Naive thymus-derived CD4-positive, alpha-beta T cell (primary cell): ENCODE measurements at regions of chr1 and their contacts with region 1.

Region 1: DNA sequence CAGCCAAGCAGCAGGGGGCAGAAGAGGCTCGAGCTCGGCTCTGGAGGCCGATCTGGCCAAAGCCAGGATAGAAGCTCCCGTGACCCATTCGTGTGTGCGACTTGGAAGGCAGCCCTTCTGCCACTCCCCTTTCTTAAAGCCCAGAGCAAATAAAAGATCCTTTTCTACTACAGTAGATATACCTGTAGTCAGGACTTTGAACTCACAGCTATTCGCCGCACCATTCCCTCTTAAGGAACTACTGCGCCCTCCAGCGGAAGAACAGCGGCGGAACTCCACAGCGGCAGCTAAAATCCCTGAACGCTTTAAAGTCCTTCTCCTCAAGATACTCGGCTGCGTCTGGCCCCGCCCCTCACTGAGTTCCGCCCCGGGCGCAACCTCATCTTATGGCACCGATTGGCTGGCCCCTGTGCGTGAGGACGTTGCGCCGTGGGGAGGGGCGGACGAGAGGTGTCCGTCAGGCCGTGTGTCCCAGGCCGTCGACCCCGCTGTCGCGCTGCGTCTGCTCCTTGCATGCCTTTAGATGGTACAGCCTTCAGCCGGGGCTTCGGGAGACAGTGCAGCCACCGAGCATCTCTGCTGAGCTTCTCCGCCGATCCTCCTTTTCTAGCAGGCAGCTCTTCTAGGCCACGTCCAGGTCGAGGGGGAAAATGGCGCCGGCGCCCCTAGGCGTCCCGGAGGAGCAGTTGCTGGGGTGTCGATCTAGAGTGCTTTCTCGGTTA is at the start of gene LRIG2:
- DNase-seq: peak; percentile 90 to 97 (median 96)
- ATAC-seq: peak; percentile 98
- H3K4me3 ChIP-seq: peak within 1 kb of the TSS; percentile 83
- H3K4me3 Mint-ChIP-seq: peak within 1 kb of the TSS; percentile 95 to 100 (median 98)
- H3K27ac ChIP-seq: peak within 1 kb of the TSS; percentile 82
- H3K27ac Mint-ChIP-seq: peak within 1 kb of the TSS; percentile 91 to 98 (median 93)
- H3K4me1 ChIP-seq: peaks cover 10 to 18% of the 10 kb centered on the region in 2 donors
- H3K4me1 Mint-ChIP-seq: peaks cover 18 to 42% (median 29%) of the 10 kb centered on the region in 7 donors
- H3K27me3 ChIP-seq: no peaks in the 10 kb centered on the region
- H3K27me3 Mint-ChIP-seq: no peaks in the 10 kb centered on the region
- total RNA-seq, gene LRIG2: 15.5 to 27.0 (median 20.2) TPM

Region 2: GRCh38 chr1:111406321-111406768 is 1666.6 kb before region 1 on chr1:
- CTCF ChIA-PET with region 1: no interaction called
- POLR2A ChIA-PET with region 1: no interaction called
- intact Hi-C with region 1: loop called in 1 of 2 experiments (anchors 2 kb)
- DNase-seq: peak in 8 of 9 donors; percentile 33 to 74 (median 64)
- ATAC-seq: peak; percentile 99
- H3K4me3 ChIP-seq: no peak overlapping the region
- H3K4me3 Mint-ChIP-seq: peak overlapping the region; percentile 29 to 81 (median 61)
- H3K27ac ChIP-seq: peak overlapping the region; percentile 54
- H3K27ac Mint-ChIP-seq: peak overlapping the region in 8 of 9 donors; percentile 67 to 90 (median 78)
- H3K4me1 ChIP-seq: peaks cover 12 to 24% of the 10 kb centered on the region in 2 donors
- H3K4me1 Mint-ChIP-seq: peaks cover 14 to 38% (median 31%) of the 10 kb centered on the region in 7 donors
- H3K27me3 ChIP-seq: no peaks in the 10 kb centered on the region
- H3K27me3 Mint-ChIP-seq: peaks cover 0 to 26% (median 0%) of the 10 kb centered on the region in 5 donors

Region 3: GRCh38 chr1:112619520-112620376 is 453.2 kb before region 1 on chr1 and contains the start of gene CAPZA1:
- CTCF ChIA-PET with region 1: no interaction called
- POLR2A ChIA-PET with region 1: interaction called, 7 read pairs
- intact Hi-C with region 1: loop called (anchors 2 kb)
- DNase-seq: peak; percentile 83 to 93 (median 91)
- ATAC-seq: peak; percentile 89
- H3K4me3 ChIP-seq: peak within 1 kb of the TSS; percentile 93
- H3K4me3 Mint-ChIP-seq: peak within 1 kb of the TSS; percentile 98 to 100 (median 99)
- H3K27ac ChIP-seq: peak within 1 kb of the TSS; percentile 100
- H3K27ac Mint-ChIP-seq: peak within 1 kb of the TSS; percentile 99 to 100 (median 100)
- H3K4me1 ChIP-seq: peaks cover 19 to 21% of the 10 kb centered on the region in 2 donors
- H3K4me1 Mint-ChIP-seq: peaks cover 27 to 55% (median 46%) of the 10 kb centered on the region in 7 donors
- H3K27me3 ChIP-seq: no peaks in the 10 kb centered on the region
- H3K27me3 Mint-ChIP-seq: peaks cover 0 to 1% (median 0%) of the 10 kb centered on the region in 5 donors
- total RNA-seq, gene CAPZA1: 114 to 237 (median 143) TPM

Region 4: DNA sequence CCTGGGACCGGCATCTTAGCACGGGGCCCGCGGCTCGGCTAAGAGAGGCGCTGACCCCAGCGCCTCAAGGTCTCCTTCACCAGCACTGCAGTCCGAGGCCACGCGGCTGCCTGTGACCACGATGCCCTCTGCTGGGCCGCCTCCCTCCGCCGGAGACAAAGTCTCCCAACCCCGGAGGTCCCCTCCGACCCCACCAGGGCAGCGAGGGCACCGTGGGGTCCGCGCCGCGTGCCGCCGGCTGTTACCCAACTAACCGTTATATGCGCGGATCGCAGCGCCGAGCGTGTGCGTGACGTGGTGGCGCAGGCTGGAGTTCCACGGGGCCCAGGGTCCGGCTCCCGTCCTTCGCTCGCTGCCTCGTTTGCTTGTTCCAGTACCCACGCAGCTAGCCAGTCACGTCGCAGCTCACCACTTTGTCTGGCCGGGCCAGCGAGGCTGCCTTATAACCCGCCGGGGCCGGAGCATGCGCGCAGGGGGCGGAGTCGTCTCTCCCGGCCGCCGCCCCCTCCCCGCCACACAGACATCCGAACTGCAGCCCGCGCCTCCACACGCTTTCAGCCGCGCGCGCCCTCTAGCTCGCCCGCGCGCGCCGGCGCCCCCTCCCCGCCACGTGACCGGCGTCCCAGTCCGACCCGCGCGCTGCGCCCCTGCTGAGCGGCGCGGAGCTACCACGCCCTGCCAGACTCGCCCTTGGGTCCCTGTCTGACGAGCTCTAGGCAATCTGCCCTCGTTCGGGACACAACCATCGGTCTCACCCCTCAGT is 117.0 kb before region 1 on chr1 and contains the start of gene SLC16A1:
- CTCF ChIA-PET with region 1: interaction called, 4 read pairs
- POLR2A ChIA-PET with region 1: interaction called, 5 read pairs
- intact Hi-C with region 1: loop called (anchors 2 kb)
- DNase-seq: peak; percentile 80 to 94 (median 87)
- ATAC-seq: peak; percentile 90
- H3K4me3 ChIP-seq: peak within 1 kb of the TSS; percentile 97
- H3K4me3 Mint-ChIP-seq: peak within 1 kb of the TSS; percentile 71 to 100 (median 97)
- H3K27ac ChIP-seq: peak within 1 kb of the TSS; percentile 81
- H3K27ac Mint-ChIP-seq: peak within 1 kb of the TSS; percentile 25 to 100 (median 88)
- H3K4me1 ChIP-seq: peaks cover 16 to 17% of the 10 kb centered on the region in 2 donors
- H3K4me1 Mint-ChIP-seq: peaks cover 33 to 66% (median 57%) of the 10 kb centered on the region in 7 donors
- H3K27me3 ChIP-seq: no peaks in the 10 kb centered on the region
- H3K27me3 Mint-ChIP-seq: no peaks in the 10 kb centered on the region
- total RNA-seq, gene SLC16A1: 10.1 to 43.6 (median 19.1) TPM

Region 5: GRCh38 chr1:113677250-113678158 is 604.6 kb after region 1 on chr1:
- CTCF ChIA-PET with region 1: interaction called, 4 read pairs
- POLR2A ChIA-PET with region 1: no interaction called
- intact Hi-C with region 1: loop called (anchors 2 kb)
- DNase-seq: peak in 5 of 9 donors; percentile 23 to 49 (median 39)
- ATAC-seq: peak; percentile 60
- H3K4me3 ChIP-seq: no peak overlapping the region
- H3K4me3 Mint-ChIP-seq: no peak overlapping the region
- H3K27ac ChIP-seq: no peak overlapping the region
- H3K27ac Mint-ChIP-seq: no peak overlapping the region
- H3K4me1 ChIP-seq: no peaks in the 10 kb centered on the region
- H3K4me1 Mint-ChIP-seq: peaks cover 0 to 10% (median 0%) of the 10 kb centered on the region in 7 donors
- H3K27me3 ChIP-seq: no peaks in the 10 kb centered on the region
- H3K27me3 Mint-ChIP-seq: no peaks in the 10 kb centered on the region

Region 6: GRCh38 chr1:113928941-113929749 is 856.2 kb after region 1 on chr1 and contains the start of gene HIPK1:
- CTCF ChIA-PET with region 1: interaction called, 3 read pairs
- POLR2A ChIA-PET with region 1: no interaction called
- intact Hi-C with region 1: loop called in 1 of 2 experiments (anchors 2 kb)
- DNase-seq: peak; percentile 88 to 97 (median 93)
- ATAC-seq: peak; percentile 69
- H3K4me3 ChIP-seq: peak within 1 kb of the TSS; percentile 100
- H3K4me3 Mint-ChIP-seq: peak within 1 kb of the TSS; percentile 96 to 100 (median 99)
- H3K27ac ChIP-seq: peak within 1 kb of the TSS; percentile 99
- H3K27ac Mint-ChIP-seq: peak within 1 kb of the TSS; percentile 93 to 100 (median 100)
- H3K4me1 ChIP-seq: peaks cover 41 to 46% of the 10 kb centered on the region in 2 donors
- H3K4me1 Mint-ChIP-seq: peaks cover 41 to 56% (median 48%) of the 10 kb centered on the region in 7 donors
- H3K27me3 ChIP-seq: no peaks in the 10 kb centered on the region
- H3K27me3 Mint-ChIP-seq: peaks cover 0 to 12% (median 0%) of the 10 kb centered on the region in 5 donors
- total RNA-seq, gene HIPK1: 95.8 to 211 (median 124) TPM

Region 7: DNA sequence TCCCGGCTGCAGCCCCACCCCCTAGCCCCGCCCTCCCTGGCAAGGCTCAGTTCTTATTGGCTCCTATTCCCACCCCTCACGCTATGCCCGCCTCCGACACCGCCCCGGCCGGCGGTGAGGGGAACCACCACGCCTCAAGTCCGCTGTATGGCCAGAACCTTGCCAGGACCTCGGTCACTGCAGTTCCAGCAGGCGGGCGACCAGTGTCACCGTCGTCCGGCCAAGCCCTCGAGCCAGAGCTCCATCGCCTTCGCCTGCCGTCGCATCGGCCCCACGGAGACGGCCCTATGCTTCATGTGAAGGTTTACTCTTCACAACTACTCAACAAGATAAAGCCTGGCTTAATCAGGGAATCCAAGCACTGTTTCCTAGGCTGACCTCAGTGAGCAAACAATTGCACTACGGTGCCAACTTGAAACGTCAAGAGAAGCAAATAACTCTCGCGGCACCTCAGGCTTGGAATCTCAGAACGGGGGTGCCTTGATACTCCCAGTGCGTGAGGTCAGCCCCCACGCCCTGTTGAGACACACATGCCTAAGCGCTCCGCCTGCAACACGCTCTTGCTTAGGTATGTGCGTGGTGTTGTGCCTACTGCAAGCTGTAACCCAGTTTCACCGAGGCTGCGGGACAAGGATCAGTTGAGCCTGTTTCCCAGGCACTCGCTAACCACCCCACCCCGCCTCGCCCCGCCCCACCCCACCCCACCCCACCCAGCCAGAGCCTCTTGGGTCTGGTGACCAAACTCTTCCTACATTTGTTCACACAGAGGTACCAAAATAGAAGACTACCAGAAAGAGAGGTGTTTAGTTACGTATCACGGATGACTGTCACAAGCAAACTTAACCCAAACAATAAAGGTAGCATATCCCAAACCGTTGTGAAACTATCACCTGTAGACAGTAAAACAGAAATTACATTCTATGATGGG is 1597.4 kb after region 1 on chr1:
- CTCF ChIA-PET with region 1: no interaction called
- POLR2A ChIA-PET with region 1: no interaction called
- intact Hi-C with region 1: loop called in 1 of 2 experiments (anchors 2 kb)
- DNase-seq: peak; percentile 60 to 84 (median 76)
- ATAC-seq: peak; percentile 99
- H3K4me3 ChIP-seq: peak overlapping the region; percentile 77
- H3K4me3 Mint-ChIP-seq: peak overlapping the region; percentile 84 to 98 (median 96)
- H3K27ac ChIP-seq: peak overlapping the region; percentile 45
- H3K27ac Mint-ChIP-seq: peak overlapping the region in 7 of 9 donors; percentile 58 to 91 (median 82)
- H3K4me1 ChIP-seq: no peaks in the 10 kb centered on the region
- H3K4me1 Mint-ChIP-seq: peaks cover 0 to 16% (median 9%) of the 10 kb centered on the region in 7 donors
- H3K27me3 ChIP-seq: no peaks in the 10 kb centered on the region
- H3K27me3 Mint-ChIP-seq: peaks cover 2 to 60% (median 14%) of the 10 kb centered on the region in 5 donors